ENCODE measurements at regions of chr6 and their contacts with region 1.

Region 1: DNA sequence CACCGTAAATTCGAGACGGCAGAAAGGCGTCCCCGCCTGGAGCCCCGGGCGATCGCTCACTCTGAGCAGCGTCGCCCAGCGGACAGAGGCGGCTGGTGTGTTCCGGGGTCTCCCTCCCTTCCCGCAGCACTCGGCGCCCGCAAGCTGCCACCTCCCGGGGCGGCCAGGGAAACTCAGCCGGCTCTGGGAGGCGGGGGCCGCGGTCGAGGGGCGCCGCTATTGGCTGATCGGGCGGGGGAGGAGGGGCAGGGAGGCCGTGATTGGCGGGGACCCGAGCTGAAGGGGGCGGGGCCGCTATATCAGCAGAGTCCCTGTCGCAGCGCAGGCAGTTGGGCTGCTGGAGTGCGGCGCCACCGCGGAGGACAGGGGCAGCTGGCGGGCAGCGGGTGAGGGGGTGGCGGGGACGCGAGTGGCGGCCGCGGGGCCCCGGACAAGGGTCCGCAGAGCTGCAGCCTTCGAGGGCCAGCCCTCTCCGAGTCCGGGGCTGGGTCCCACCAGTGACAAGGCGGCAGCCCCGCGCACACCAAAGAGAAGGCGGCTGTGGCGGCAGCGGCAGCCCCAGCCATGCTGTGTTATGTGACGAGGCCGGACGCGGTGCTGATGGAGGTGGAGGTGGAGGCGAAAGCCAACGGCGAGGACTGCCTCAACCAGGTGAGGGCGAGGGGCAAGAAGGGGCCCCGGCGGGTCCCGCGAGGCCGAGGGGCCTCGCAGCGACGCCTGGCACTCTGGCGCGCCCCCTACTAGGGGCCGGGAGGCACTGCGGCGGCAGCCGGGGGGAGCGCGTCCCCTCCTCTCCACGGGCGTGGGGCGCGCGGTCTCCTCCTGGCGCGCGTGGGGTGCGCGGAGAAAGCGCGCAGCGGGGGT is at the start of gene MYLIP:
- DNase-seq: peak; percentile 94
- H3K4me3 Mint-ChIP-seq: peak within 1 kb of the TSS; percentile 90
- H3K27ac Mint-ChIP-seq: peak within 1 kb of the TSS; percentile 86
- H3K4me1 Mint-ChIP-seq: peaks cover 25% of the 10 kb centered on the region
- H3K27me3 Mint-ChIP-seq: peaks cover 16% of the 10 kb centered on the region
- total RNA-seq, gene MYLIP: 81.2 and 83.1 TPM in 2 replicates

Region 2: DNA sequence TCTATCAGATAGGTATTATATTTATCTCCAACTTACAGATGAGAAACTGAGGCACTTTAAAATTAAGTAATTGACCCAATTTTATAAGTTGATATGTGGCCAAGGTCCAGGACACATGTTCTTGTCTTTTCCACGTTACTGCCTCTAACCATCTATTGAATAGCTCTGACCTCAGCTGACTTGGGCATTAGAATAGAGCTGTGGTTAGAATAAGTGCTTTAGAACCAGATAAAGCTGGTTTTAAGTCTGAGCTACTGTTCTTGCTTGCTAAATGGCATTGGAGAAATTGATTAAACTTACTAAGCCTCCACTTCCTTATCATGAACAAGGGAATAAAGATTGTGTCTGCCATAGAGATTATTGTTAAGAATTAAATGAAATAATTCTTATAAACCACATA is 318.4 kb before region 1 on chr6:
- intact Hi-C with region 1: no loop called
- DNase-seq: no peak
- H3K4me3 Mint-ChIP-seq: no peak overlapping the region
- H3K27ac Mint-ChIP-seq: no peak overlapping the region
- H3K4me1 Mint-ChIP-seq: peaks cover 10% of the 10 kb centered on the region
- H3K27me3 Mint-ChIP-seq: no peaks in the 10 kb centered on the region

Region 3: DNA sequence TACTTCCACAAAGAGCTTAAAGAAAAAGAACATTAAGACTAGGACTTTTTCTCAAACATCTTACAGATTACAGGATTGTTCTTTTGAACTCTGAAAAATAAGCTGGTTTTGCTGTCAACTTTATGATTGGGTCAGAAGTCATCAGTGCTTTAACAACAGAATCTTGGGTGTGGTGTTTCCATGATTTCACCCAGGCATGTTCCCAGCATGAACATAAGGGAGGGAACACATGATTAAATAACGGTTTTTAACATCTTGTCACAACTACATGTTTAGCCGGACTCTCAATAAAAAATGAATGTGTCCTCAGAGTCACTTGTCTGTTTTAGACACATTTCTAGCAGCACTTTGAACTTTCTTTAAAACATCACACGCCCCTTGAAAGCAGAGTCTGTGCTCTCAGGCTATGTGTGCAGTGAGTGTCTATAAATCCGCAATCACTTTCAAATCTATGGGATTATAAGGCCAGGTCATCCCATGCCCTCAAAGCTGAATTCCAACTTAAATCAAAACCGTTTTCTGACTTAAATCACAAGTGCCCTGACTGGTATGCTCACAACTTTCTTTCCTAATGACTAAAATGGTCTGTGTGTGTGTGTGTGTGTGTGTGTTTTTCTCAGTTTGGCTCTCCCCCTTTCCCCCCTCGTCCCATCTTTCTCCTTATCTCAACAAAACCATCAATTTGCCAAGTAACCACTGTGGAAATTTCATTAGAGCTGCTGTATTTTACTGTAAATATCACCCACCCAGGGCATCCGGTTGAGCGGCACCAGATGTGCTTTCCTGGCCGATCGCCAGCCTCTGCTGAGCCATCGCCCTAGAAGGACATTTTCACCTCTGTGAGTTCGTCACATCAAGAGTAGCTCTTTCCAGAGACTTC is 249.4 kb before region 1 on chr6:
- intact Hi-C with region 1: loop called (anchors 2 kb)
- DNase-seq: peak; percentile 29
- H3K4me3 Mint-ChIP-seq: no peak overlapping the region
- H3K27ac Mint-ChIP-seq: peak overlapping the region; percentile 68
- H3K4me1 Mint-ChIP-seq: peaks cover 49% of the 10 kb centered on the region
- H3K27me3 Mint-ChIP-seq: no peaks in the 10 kb centered on the region

Region 4: DNA sequence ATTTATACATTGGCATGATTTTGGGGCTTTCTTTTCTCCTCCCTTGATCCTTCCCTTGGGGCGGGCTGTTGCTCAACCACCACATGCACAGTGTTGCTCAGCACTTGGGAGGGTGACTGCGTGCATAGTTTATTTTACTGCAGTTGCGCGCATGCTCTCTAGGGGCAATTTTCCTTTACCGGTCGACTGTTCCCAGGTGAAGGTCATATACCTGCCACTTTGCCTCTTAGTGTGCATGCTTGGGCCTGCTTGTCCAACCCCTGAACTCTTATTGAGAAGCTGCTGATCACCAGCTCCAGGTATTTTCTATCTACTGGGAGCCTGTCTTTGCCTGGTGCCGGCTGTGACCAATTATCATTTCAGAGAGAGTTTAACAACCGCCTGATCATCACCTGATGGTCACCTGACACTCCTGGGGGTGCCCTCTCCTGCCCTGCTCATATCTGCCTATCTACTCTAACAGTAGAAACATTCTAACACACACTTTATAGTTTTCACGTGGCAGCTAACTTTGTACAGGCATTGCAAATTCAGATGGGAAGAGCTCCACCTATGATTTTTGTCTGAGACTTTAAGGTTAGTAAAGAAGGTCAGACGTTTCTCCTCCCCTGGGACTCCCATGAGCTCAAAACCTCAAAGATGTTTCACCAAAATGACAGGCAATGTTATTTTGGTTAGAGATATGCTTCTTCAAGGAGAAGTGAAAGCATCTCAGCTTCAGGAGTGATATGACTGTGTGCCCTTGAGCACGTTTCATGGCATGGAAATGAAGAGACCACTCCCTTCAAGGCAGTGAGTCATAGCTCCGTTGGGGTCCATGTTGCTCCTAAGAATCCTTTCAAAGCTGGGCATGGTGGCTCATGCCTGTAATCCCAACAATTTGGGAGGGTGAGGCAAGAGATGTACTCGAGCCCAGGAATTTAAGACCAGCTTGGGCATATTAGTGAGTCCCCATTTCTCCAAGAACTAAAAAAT is 227.6 kb before region 1 on chr6:
- intact Hi-C with region 1: loop called (anchors 2 kb)
- DNase-seq: peak; percentile 64
- H3K4me3 Mint-ChIP-seq: peak overlapping the region; percentile 24
- H3K27ac Mint-ChIP-seq: peak overlapping the region; percentile 99
- H3K4me1 Mint-ChIP-seq: peaks cover 69% of the 10 kb centered on the region
- H3K27me3 Mint-ChIP-seq: no peaks in the 10 kb centered on the region

Region 5: DNA sequence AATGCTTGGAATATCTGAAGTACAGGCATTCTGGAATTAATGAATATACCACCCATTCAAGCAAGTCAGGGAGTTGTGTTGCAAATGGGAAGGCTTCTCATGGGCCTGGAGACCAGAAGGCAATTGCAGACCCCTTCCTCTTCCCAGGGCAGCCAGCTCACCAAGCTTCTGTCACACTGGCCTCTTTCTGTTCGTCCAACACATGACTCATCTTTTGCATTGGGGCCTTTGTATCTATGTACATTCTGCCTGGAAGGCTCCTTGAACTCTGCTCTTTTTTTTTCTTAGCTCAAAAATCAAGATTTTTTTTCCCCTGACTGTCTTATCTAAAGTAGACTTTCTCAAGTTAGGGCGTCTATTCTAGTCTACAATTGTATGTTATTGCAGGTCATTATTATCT is 133.0 kb before region 1 on chr6:
- intact Hi-C with region 1: loop called (anchors 2 kb)
- DNase-seq: no peak
- H3K4me3 Mint-ChIP-seq: no peak overlapping the region
- H3K27ac Mint-ChIP-seq: peak overlapping the region; percentile 55
- H3K4me1 Mint-ChIP-seq: peaks cover 24% of the 10 kb centered on the region
- H3K27me3 Mint-ChIP-seq: no peaks in the 10 kb centered on the region

Region 6: GRCh38 chr6:16007146-16007545 is 121.8 kb before region 1 on chr6:
- intact Hi-C with region 1: no loop called
- DNase-seq: no peak
- H3K4me3 Mint-ChIP-seq: no peak overlapping the region
- H3K27ac Mint-ChIP-seq: no peak overlapping the region
- H3K4me1 Mint-ChIP-seq: peaks cover 3% of the 10 kb centered on the region
- H3K27me3 Mint-ChIP-seq: peaks cover 8% of the 10 kb centered on the region

Region 7: DNA sequence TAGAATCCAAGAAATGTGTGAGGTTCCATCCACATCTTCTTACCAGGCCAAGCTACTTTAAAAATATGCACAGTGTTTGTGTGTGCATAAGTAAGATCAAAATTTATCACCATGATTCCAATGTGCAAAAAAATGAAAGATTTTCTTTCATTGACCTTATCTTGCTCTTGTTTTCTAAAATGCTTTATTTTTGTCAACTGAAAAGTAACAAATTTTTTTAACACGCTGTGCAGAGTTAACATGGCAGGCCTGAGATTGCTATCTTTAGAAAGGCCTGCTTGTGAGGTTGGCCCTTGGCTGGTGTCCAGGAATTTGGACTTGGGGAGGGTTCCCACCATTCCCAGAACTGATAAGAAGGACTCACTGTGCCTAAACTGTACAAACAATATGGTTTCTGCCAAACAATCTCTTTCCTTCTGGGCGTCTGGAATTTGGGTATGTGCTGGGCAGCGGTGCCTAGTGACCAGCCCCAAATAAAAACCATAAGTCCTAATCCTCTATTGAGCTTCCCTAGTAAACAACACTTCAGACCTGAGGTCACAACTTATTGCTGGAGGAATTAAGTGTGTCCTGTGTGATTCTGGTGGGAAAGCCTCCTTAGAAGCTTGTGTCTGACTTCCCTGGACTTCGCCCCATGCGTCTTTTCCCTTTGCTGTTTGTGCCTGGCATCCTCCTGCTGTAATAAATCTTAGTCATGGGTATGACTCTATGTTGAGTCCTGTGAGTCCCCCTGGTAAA is 19.9 kb before region 1 on chr6:
- intact Hi-C with region 1: no loop called
- DNase-seq: no peak
- H3K4me3 Mint-ChIP-seq: no peak overlapping the region
- H3K27ac Mint-ChIP-seq: no peak overlapping the region
- H3K4me1 Mint-ChIP-seq: no peaks in the 10 kb centered on the region
- H3K27me3 Mint-ChIP-seq: peaks cover 3% of the 10 kb centered on the region

Region 8: GRCh38 chr6:16168858-16169257 is 39.9 kb after region 1 on chr6:
- intact Hi-C with region 1: loop called (anchors 2 kb)
- DNase-seq: no peak
- H3K4me3 Mint-ChIP-seq: no peak overlapping the region
- H3K27ac Mint-ChIP-seq: no peak overlapping the region
- H3K4me1 Mint-ChIP-seq: peaks cover 41% of the 10 kb centered on the region
- H3K27me3 Mint-ChIP-seq: peaks cover 3% of the 10 kb centered on the region

Region 9: DNA sequence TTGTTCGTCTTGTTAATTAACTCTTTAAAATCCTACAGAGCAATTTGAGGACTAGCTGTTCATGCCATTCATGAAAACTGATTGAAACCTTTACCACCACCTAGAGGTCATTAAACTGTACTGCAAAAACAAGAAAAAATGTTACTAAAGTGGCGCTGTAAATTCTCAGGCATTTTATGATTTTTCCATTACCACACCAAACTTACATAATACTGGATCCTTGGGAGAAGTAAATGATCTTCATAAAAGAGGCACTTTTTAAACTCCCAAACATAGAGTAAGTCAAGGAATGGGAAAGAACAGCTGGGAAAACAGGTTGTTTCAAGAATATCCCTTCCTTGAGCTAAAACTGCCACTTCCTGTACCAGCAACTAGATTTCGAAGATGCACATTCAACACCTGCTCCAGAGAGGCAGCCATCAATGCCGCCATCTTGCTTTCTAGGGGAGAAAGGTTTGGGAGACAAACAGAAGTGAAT is 54.2 kb after region 1 on chr6:
- intact Hi-C with region 1: loop called (anchors 2 kb)
- DNase-seq: no peak
- H3K4me3 Mint-ChIP-seq: no peak overlapping the region
- H3K27ac Mint-ChIP-seq: peak overlapping the region; percentile 37
- H3K4me1 Mint-ChIP-seq: peaks cover 28% of the 10 kb centered on the region
- H3K27me3 Mint-ChIP-seq: peaks cover 11% of the 10 kb centered on the region

Region 10: GRCh38 chr6:16803294-16804200 is 674.6 kb after region 1 on chr6:
- intact Hi-C with region 1: no loop called
- DNase-seq: no peak
- H3K4me3 Mint-ChIP-seq: no peak overlapping the region
- H3K27ac Mint-ChIP-seq: no peak overlapping the region
- H3K4me1 Mint-ChIP-seq: peaks cover 26% of the 10 kb centered on the region
- H3K27me3 Mint-ChIP-seq: peaks cover 17% of the 10 kb centered on the region

Measured in activated T-helper 2 cell treated with anti-CD3 and anti-CD28 coated beads, Interferon-gamma antibody, Interleukin-2, Interleukin-4, amounts not matched to agents 10 μg/mL and 5 μg/mL and 100 μg/mL, durations not matched to agents 14 hours and 24 hours and 36 hours (primary cell).